ENCODE measurements at regions of chr3 and their contacts with region 1.

Region 1: DNA sequence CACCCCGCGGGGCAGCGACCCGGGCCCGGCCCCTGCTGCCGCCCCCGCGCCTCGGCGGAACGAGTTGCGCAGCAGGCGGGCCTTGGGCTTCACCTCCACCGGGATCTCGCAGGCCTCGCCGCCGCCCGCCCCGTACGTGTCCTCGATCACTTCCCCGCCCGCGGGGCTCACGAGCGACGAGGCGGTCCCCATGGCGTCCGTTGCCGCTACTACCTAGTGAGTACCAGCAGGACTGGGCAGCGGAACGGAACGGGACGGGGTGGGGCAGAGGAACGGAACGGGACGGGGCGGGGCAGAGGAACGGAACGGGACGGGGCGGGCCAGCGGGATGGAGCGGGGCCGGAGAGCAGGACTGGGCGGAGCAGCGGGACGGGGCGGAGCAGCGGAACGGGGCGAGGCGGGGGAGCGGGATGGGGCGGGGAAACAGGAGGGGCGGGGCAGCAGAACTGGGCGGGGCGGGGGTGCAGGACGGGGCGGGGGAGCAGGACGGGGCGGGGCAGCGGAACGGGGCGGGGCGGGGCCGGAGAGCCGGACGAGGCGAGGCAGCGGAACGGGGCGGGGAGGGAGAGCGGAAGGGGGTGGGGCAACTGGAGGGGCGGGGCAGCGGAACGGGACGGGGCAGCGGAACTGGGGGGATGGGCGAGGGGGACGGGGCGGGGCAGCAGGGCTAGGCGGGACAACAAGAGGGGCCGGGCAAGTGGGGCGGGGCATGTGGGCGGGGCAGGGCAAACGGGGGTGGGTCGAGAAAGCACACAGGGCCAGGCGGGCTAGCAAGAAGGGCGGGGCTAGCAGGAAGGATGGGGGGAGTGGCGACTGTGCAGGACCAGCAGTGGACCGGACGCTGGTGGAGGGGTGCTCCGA is at the start of gene NPHP3:
- DNase-seq: peak; percentile 84 to 96 (median 94)
- H3K4me3 ChIP-seq: peak within 1 kb of the TSS; percentile 68 to 92 (median 89)
- H3K4me3 Mint-ChIP-seq: peak within 1 kb of the TSS; percentile 91
- H3K27ac ChIP-seq: peak within 1 kb of the TSS; percentile 63 to 84
- H3K27ac Mint-ChIP-seq: peak within 1 kb of the TSS; percentile 70 to 90 (median 88)
- H3K4me1 ChIP-seq: peaks cover 21 to 26% of the 10 kb centered on the region in 2 donors
- H3K4me1 Mint-ChIP-seq: peaks cover 25% of the 10 kb centered on the region
- H3K27me3 ChIP-seq: no peaks in the 10 kb centered on the region
- H3K27me3 Mint-ChIP-seq: no peaks in the 10 kb centered on the region
- CTCF ChIP-seq: no peak
- polyA plus RNA-seq, gene NPHP3: 1.3 to 15.0 (median 2.0) TPM

Region 2: GRCh38 chr3:131381444-131382291 is 1340.7 kb before region 1 on chr3 and contains the start of gene NUDT16:
- intact Hi-C with region 1: loop called in 1 of 2 experiments (anchors 5 kb)
- DNase-seq: peak; percentile 98 to 99 (median 99)
- H3K4me3 ChIP-seq: peak within 1 kb of the TSS; percentile 60 to 93 (median 89)
- H3K4me3 Mint-ChIP-seq: peak within 1 kb of the TSS; percentile 94 to 97
- H3K27ac ChIP-seq: peak within 1 kb of the TSS; percentile 74 to 94
- H3K27ac Mint-ChIP-seq: peak within 1 kb of the TSS; percentile 91 to 97 (median 95)
- H3K4me1 ChIP-seq: peaks cover 56 to 67% of the 10 kb centered on the region in 2 donors
- H3K4me1 Mint-ChIP-seq: peaks cover 67% of the 10 kb centered on the region
- H3K27me3 ChIP-seq: no peaks in the 10 kb centered on the region
- H3K27me3 Mint-ChIP-seq: no peaks in the 10 kb centered on the region
- CTCF ChIP-seq: no peak
- polyA plus RNA-seq, gene NUDT16: 23.6 to 27.0 (median 27.0) TPM

Region 3: GRCh38 chr3:133426721-133427120 is 704.3 kb after region 1 on chr3:
- intact Hi-C with region 1: loop called (anchors 2 to 5 kb)
- DNase-seq: no peak
- H3K4me3 ChIP-seq: no peak overlapping the region
- H3K4me3 Mint-ChIP-seq: no peak overlapping the region
- H3K27ac ChIP-seq: no peak overlapping the region
- H3K27ac Mint-ChIP-seq: peak overlapping the region in 1 of 7 donors; percentile 60
- H3K4me1 ChIP-seq: no peaks in the 10 kb centered on the region
- H3K4me1 Mint-ChIP-seq: peaks cover 3% of the 10 kb centered on the region
- H3K27me3 ChIP-seq: no peaks in the 10 kb centered on the region
- H3K27me3 Mint-ChIP-seq: peaks cover 0 to 5% (median 2%) of the 10 kb centered on the region in 3 donors
- CTCF ChIP-seq: no peak

Region 4: DNA sequence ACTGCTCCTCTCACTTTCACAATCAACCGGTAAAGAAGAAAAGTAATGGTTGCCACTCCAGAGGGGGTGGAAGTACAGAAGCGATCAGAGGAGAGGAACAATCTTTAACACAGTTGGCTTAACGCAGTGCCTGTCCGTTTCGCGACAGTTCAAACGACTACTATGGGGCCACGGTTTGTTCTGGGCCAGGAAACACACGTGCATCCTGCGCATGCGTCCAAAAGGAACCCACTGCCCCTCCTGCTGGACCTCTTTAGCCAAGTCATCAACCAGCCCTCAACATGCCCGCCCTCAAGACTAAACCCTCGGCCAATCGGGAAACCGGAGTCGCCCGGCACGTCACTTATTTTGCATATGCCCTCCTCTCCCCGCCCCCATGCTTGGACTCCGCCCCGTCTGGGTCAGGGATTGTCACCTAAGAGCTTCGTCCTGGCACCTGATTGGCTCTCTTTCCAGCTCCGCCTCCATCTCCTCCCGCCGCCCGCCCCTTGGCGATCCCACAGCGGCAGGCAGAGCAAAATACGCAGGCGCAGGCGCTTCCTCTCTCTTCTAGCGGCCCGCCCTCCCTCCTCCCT is 850.7 kb after region 1 on chr3:
- intact Hi-C with region 1: loop called (anchors 2 to 5 kb)
- DNase-seq: peak; percentile 100
- H3K4me3 ChIP-seq: peak overlapping the region; percentile 39 to 100 (median 92)
- H3K4me3 Mint-ChIP-seq: peak overlapping the region; percentile 77 to 88
- H3K27ac ChIP-seq: peak overlapping the region; percentile 97 to 99
- H3K27ac Mint-ChIP-seq: peak overlapping the region; percentile 99 to 100 (median 99)
- H3K4me1 ChIP-seq: peaks cover 61 to 78% of the 10 kb centered on the region in 2 donors
- H3K4me1 Mint-ChIP-seq: peaks cover 73% of the 10 kb centered on the region
- H3K27me3 ChIP-seq: no peaks in the 10 kb centered on the region
- H3K27me3 Mint-ChIP-seq: peaks cover 0 to 1% (median 0%) of the 10 kb centered on the region in 3 donors
- CTCF ChIP-seq: peak; percentile 13

Region 5: GRCh38 chr3:133661454-133662277 is 939.3 kb after region 1 on chr3 and contains the start of gene TOPBP1:
- intact Hi-C with region 1: loop called (anchors 10 kb)
- DNase-seq: peak; percentile 60 to 76 (median 74)
- H3K4me3 ChIP-seq: peak within 1 kb of the TSS; percentile 69 to 98 (median 96)
- H3K4me3 Mint-ChIP-seq: peak within 1 kb of the TSS; percentile 96 to 99
- H3K27ac ChIP-seq: peak within 1 kb of the TSS; percentile 37 to 96
- H3K27ac Mint-ChIP-seq: peak within 1 kb of the TSS; percentile 91 to 98 (median 94)
- H3K4me1 ChIP-seq: peaks cover 15 to 20% of the 10 kb centered on the region in 2 donors
- H3K4me1 Mint-ChIP-seq: peaks cover 40% of the 10 kb centered on the region
- H3K27me3 ChIP-seq: no peaks in the 10 kb centered on the region
- H3K27me3 Mint-ChIP-seq: no peaks in the 10 kb centered on the region
- CTCF ChIP-seq: no peak
- polyA plus RNA-seq, gene TOPBP1: 4.9 to 24.3 (median 7.0) TPM

Region 6: GRCh38 chr3:133805527-133806475 is 1083.4 kb after region 1 on chr3 and contains the start of gene SRPRB:
- intact Hi-C with region 1: loop called (anchors 10 kb)
- DNase-seq: peak; percentile 88 to 92 (median 91)
- H3K4me3 ChIP-seq: peak within 1 kb of the TSS; percentile 82 to 94 (median 89)
- H3K4me3 Mint-ChIP-seq: peak within 1 kb of the TSS; percentile 94 to 97
- H3K27ac ChIP-seq: peak within 1 kb of the TSS; percentile 19 to 73
- H3K27ac Mint-ChIP-seq: peak within 1 kb of the TSS; percentile 73 to 91 (median 87)
- H3K4me1 ChIP-seq: peaks cover 16% of the 10 kb centered on the region in 2 donors
- H3K4me1 Mint-ChIP-seq: peaks cover 23% of the 10 kb centered on the region
- H3K27me3 ChIP-seq: no peaks in the 10 kb centered on the region
- H3K27me3 Mint-ChIP-seq: peaks cover 3 to 7% (median 6%) of the 10 kb centered on the region in 3 donors
- CTCF ChIP-seq: no peak
- polyA plus RNA-seq, gene SRPRB: 6.1 to 30.6 (median 29.9) TPM